Activated CD4-positive, alpha-beta memory T cell treated with anti-CD3 and anti-CD28 coated beads, Interleukin-2, amount 10 ng/mL, durations not matched to agents 7 days and 5 days (primary cell): ENCODE measurements at regions of chr9 and their contacts with region 1.

Region 1: DNA sequence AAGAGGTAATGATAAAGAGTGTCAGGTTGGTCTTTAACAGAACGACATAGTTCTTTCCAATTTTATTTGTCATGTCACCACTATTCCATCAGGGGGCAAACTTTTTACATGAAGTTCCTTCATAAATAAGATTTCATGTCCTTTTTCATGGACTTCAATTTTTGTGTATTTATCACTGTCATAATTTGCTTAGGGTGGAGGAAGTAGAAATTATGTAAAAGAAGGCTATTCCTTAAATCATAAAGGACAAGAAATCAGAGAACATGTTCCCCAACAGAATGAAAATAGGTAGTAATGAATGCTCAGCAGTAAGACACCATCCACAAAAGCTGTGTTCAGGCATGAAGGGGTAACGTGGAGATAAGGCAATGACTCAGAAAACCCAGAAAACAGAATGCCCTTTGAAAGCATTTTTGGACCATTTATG is 72.7 kb downstream of the ZFAND5 start:
- DNase-seq: no peak
- H3K4me3 Mint-ChIP-seq: no peak overlapping the region
- H3K27ac Mint-ChIP-seq: no peak overlapping the region
- H3K4me1 Mint-ChIP-seq: peaks cover 7% of the 10 kb centered on the region
- H3K27me3 Mint-ChIP-seq: peaks cover 5% of the 10 kb centered on the region

Region 2: DNA sequence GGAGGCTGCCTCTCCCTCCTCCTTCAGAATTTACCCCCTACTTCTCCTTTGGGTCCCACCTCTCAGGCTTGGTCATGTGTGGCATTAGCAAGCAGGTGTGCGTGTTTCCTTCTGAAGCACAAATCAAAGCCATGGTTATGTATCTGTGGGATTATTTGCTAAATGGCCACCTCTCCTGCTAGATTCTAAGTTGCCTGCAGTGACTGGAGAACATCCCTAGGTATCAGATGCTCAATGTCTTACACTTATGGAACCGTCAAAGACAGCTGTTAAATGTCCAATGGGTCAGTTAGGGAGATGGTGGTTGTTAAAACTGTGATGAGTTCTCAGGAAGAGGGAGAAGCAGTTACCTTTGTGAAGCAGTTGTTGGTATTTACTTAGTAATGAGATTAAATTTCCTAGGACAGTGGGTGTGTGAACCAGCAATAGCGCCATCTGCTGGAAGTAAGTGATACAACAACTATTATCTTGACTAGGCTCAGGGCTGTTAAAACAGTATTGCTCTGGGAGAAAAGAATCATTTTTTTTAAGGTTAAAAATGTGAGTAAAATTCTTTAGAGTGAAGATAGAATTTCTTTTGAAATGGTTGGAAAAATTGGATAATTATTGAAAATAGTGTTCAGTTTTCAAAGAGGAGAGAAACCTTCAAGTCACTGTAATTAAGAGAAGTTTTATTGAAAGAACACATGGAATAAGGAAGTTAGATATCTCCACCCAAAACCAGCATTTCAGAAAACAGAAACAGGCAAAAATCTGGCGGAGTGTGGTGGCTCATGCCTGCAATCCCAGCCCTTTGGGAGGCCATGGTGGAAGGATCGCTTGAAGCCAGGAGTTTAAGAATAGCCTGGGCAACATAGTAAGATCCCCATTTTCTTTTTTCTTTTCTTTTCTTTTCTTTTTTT is 300.5 kb after region 1 on chr9:
- CTCF ChIA-PET with region 1: interaction called, 13 read pairs
- POLR2A ChIA-PET with region 1: no interaction called
- DNase-seq: peak; percentile 42
- H3K4me3 Mint-ChIP-seq: no peak overlapping the region
- H3K27ac Mint-ChIP-seq: no peak overlapping the region
- H3K4me1 Mint-ChIP-seq: peaks cover 65% of the 10 kb centered on the region
- H3K27me3 Mint-ChIP-seq: peaks cover 8% of the 10 kb centered on the region

Region 3: DNA sequence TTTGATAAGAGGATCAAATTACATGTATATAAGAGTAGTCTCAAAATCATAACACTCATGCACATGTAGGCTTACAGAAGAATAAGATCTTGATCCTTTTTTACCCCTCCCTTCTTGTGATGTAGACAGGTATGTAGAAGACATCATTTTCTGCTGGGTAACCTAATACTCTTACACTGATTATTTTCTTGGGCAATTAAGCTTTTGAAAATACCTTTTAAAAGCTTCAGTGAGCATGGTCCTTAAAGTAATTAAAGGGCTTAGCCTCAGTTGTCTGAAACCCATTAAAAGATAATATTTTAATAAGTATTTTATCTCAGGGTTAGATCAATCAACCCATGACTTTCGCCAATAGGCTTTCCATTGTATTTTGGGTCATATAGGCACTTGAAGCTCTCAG is 610.0 kb after region 1 on chr9:
- CTCF ChIA-PET with region 1: no interaction called
- POLR2A ChIA-PET with region 1: no interaction called
- DNase-seq: no peak
- H3K4me3 Mint-ChIP-seq: no peak overlapping the region
- H3K27ac Mint-ChIP-seq: no peak overlapping the region
- H3K4me1 Mint-ChIP-seq: no peaks in the 10 kb centered on the region
- H3K27me3 Mint-ChIP-seq: peaks cover 8% of the 10 kb centered on the region